ENCODE measurements at regions of chr19 and their contacts with region 1.

Region 1: DNA sequence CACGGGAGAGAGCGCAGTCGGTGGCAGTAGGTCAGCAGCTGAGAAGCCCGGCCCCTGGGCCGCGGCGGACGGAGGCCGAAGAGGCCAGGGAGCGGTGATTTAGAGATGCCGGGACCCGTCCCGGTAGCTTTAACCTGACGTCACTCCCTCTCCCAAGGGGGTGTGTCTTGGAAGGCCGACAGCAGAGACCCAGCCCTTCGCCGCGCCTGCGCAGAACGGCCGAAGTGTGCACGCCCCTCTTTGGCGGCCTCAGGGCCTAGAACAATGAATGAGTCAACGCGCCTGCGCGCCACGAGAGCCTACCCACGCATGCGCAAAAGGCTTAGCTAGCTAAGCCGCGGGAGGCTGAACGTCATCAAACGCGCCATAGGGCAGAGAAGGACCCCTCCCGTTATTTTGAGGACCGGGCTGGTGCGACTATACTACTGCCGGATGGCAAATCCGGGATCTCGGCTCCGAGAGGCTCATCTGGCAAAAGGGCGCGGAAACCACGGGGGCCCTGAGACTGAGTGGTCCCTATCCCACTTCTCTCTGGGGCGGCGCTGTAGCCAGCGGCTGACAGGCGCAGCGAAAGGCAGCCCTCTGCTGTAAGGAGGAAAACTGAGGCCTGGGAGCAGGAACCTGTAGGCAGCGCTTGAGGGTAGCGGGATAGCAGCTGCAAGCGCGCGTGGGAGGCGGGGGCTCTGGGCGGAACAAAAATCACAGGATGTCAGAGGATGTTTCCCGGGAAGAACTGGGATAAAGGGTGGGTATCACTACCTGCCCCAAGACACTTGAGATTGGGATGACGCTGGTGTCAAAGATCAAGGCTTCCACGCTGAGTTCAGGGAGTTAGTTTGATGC is at the starts of genes IRGQ and ZNF576:
- DNase-seq: peak; percentile 100
- H3K4me3 Mint-ChIP-seq: peak within 1 kb of the TSS; percentile 99
- H3K27ac Mint-ChIP-seq: peak within 1 kb of the TSS; percentile 99
- H3K4me1 Mint-ChIP-seq: peaks cover 24% of the 10 kb centered on the region
- H3K27me3 Mint-ChIP-seq: no peaks in the 10 kb centered on the region
- CTCF ChIP-seq: no peak
- total RNA-seq, gene IRGQ: 21.0 and 26.5 TPM in 2 replicates
- total RNA-seq, gene ZNF576: 13.2 and 18.4 TPM in 2 replicates

Region 2: DNA sequence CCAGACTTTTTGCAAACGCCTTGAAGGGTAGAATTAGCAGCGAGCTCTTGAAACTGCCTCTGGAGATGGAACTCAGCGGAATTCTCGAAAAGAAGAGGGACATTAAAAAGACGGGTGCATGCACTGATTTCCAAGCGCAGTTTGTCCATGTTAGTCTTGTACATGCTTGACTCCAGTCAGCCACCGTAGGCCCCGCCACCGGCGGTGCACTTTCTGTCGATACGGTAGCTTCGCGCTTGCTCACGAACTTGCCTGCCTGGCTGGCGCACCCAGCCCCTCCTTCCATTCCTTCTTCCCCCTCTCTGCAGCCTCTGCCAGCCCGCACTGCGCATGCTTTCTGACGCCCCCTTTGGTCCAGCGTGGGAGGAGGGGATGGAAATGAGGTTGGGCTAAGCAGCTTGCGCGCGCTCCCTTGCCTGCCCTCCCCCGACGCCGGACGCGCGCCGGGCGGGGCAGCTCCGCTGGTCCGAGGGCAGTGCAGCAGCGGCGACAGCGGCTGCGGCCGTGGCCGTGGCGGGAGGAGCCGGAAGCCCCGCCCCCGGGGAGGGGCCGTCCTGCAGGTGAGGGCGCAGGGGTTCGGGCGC is 63.2 kb before region 1 on chr19 and contains the start of gene ZNF575:
- CTCF ChIA-PET with region 1: interaction called, 13 read pairs
- POLR2A ChIA-PET with region 1: interaction called, 75 read pairs
- intact Hi-C with region 1: loop called (anchors 2 kb)
- DNase-seq: peak; percentile 92
- H3K4me3 Mint-ChIP-seq: peak within 1 kb of the TSS; percentile 78
- H3K27ac Mint-ChIP-seq: peak within 1 kb of the TSS; percentile 3
- H3K4me1 Mint-ChIP-seq: peaks cover 8% of the 10 kb centered on the region
- H3K27me3 Mint-ChIP-seq: no peaks in the 10 kb centered on the region
- CTCF ChIP-seq: no peak
- total RNA-seq, gene ZNF575: 0.81 and 1.1 TPM in 2 replicates

Region 3: GRCh38 chr19:43606569-43607229 is 10.5 kb after region 1 on chr19:
- CTCF ChIA-PET with region 1: interaction called, 4 read pairs
- POLR2A ChIA-PET with region 1: interaction called, 45 read pairs
- intact Hi-C with region 1: no loop called
- DNase-seq: no peak
- H3K4me3 Mint-ChIP-seq: no peak overlapping the region
- H3K27ac Mint-ChIP-seq: peak overlapping the region; percentile 80
- H3K4me1 Mint-ChIP-seq: peaks cover 9% of the 10 kb centered on the region
- H3K27me3 Mint-ChIP-seq: no peaks in the 10 kb centered on the region
- CTCF ChIP-seq: no peak

Region 4: GRCh38 chr19:43651758-43652545 is 55.7 kb after region 1 on chr19:
- CTCF ChIA-PET with region 1: interaction called, 5 read pairs
- POLR2A ChIA-PET with region 1: interaction called, 3 read pairs
- intact Hi-C with region 1: loop called (anchors 1 kb)
- DNase-seq: peak; percentile 75
- H3K4me3 Mint-ChIP-seq: no peak overlapping the region
- H3K27ac Mint-ChIP-seq: peak overlapping the region; percentile 42
- H3K4me1 Mint-ChIP-seq: no peaks in the 10 kb centered on the region
- H3K27me3 Mint-ChIP-seq: no peaks in the 10 kb centered on the region
- CTCF ChIP-seq: peak; percentile 59

Region 5: DNA sequence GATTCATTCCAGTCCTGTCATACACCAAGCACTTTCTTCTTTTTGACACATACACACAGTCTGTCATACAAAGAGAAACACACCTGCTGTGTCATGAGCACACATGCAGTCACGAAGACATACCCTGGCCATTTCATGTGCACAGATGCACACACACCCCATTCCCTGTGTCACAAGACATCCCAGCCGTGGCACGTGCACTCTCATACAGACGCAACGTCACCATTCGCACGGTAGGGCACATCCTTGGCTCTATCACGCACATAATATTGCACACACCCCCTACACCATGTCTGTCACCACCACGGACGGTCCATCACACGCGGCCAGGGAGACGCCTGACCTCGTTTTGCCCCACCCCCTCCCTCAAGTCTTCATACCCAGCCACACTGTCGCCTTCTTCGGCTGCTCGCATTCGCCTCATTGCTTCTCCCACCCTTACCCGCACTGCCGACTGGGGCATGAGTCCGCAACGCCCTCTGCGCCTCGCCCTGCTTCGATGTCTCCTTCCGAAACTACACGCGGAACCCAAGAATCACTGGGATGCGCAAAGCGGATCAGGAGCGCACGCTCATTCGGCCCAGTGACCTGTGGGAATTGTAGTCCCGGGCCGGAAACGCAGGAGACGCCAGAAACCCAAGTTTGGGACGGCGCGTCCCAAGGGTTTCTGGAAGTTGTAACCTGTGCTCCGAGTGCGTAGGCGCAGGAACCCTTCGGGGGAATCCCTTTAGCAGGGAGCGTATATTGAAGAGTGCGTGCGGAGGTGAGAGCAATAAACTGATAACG is 224.1 kb after region 1 on chr19:
- CTCF ChIA-PET with region 1: no interaction called
- POLR2A ChIA-PET with region 1: no interaction called
- intact Hi-C with region 1: no loop called
- DNase-seq: no peak
- H3K4me3 Mint-ChIP-seq: peak overlapping the region; percentile 74
- H3K27ac Mint-ChIP-seq: peak overlapping the region; percentile 15
- H3K4me1 Mint-ChIP-seq: peaks cover 7% of the 10 kb centered on the region
- H3K27me3 Mint-ChIP-seq: no peaks in the 10 kb centered on the region
- CTCF ChIP-seq: no peak

Measured in MCF 10A (cell line).